Lower leg skin (tissue), 4 donors: ENCODE measurements at regions of chr16 and their contacts with region 1.

Region 1: GRCh38 chr16:84761448-84762368 is 58.1 kb upstream of the CRISPLD2 start:
- DNase-seq: peak in 1 of 2 donors; percentile 75
- H3K4me3 ChIP-seq: no peak overlapping the region
- CTCF ChIP-seq: no peak
- POLR2A ChIP-seq: no peak

Region 2: GRCh38 chr16:83533193-83533592 is 1228.5 kb before region 1 on chr16:
- intact Hi-C with region 1: no loop called
- DNase-seq: no peak
- H3K4me3 ChIP-seq: no peak overlapping the region
- CTCF ChIP-seq: no peak
- POLR2A ChIP-seq: no peak

Region 3: GRCh38 chr16:84785843-84786581 is 24.3 kb after region 1 on chr16:
- intact Hi-C with region 1: no loop called
- DNase-seq: no peak
- H3K4me3 ChIP-seq: no peak overlapping the region
- CTCF ChIP-seq: no peak
- POLR2A ChIP-seq: no peak

Region 4: GRCh38 chr16:84952335-84953189 is 190.9 kb after region 1 on chr16:
- intact Hi-C with region 1: loop called (anchors 5 kb)
- DNase-seq: peak; percentile 84 to 94
- H3K4me3 ChIP-seq: no peak overlapping the region
- CTCF ChIP-seq: peak in 1 of 3 donors; percentile 56
- POLR2A ChIP-seq: no peak